CD4-positive, alpha-beta memory T cell (primary cell): ENCODE measurements at regions of chr14 and their contacts with region 1.

Region 1: GRCh38 chr14:52299692-52300278 is 14.3 kb upstream of the PTGER2 start:
- DNase-seq: peak in 4 of 5 donors; percentile 55 to 64 (median 60)
- H3K4me3 ChIP-seq: no peak overlapping the region
- H3K4me3 Mint-ChIP-seq: peak overlapping the region in 1 of 8 donors; percentile 36
- H3K27ac ChIP-seq: no peak overlapping the region
- H3K27ac Mint-ChIP-seq: peak overlapping the region in 3 of 7 donors; percentile 39 to 62 (median 52)
- H3K4me1 ChIP-seq: peaks cover 40% of the 10 kb centered on the region
- H3K4me1 Mint-ChIP-seq: peaks cover 37 to 55% (median 53%) of the 10 kb centered on the region in 4 donors
- H3K27me3 ChIP-seq: no peaks in the 10 kb centered on the region
- H3K27me3 Mint-ChIP-seq: no peaks in the 10 kb centered on the region

Region 2: GRCh38 chr14:52015411-52016030 is 284.3 kb before region 1 on chr14:
- CTCF ChIA-PET with region 1: no interaction called
- POLR2A ChIA-PET with region 1: no interaction called
- intact Hi-C with region 1: no loop called
- DNase-seq: no peak
- H3K4me3 ChIP-seq: no peak overlapping the region
- H3K4me3 Mint-ChIP-seq: no peak overlapping the region
- H3K27ac ChIP-seq: no peak overlapping the region
- H3K27ac Mint-ChIP-seq: no peak overlapping the region
- H3K4me1 ChIP-seq: no peaks in the 10 kb centered on the region
- H3K4me1 Mint-ChIP-seq: peaks cover 0 to 5% (median 2%) of the 10 kb centered on the region in 4 donors
- H3K27me3 ChIP-seq: no peaks in the 10 kb centered on the region
- H3K27me3 Mint-ChIP-seq: peaks cover 3 to 5% of the 10 kb centered on the region in 2 donors

Region 3: DNA sequence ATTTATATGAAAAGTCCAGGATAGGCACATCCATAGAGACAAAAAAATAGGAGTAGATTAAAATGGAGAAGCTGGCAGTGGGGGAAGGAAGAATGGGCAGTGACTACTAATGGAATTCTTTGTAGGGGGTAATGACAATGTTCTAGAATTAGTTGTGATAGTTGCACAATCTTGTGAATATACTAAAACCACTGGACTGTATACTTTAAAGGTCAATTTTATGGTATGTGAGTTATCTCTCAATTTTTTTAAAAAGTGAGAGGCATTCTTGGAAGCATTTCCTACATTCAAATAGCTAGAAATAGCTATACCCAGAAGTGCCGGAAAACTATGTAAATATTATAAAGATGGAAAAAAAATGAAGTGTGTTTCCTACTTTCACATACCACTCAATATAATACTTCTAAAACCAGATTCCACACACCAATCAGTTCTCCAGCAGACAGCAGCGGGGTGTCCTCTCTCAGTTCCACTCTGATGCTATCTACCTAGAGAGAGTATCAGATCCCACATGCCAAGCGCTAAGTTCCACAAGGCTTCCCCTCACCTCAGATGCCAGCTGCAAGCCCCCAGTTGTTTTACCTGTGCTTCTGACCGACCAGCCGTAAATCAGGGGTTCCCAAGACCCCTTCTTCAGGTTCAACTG is 189.2 kb before region 1 on chr14:
- CTCF ChIA-PET with region 1: no interaction called
- POLR2A ChIA-PET with region 1: no interaction called
- intact Hi-C with region 1: no loop called
- DNase-seq: no peak
- H3K4me3 ChIP-seq: no peak overlapping the region
- H3K4me3 Mint-ChIP-seq: no peak overlapping the region
- H3K27ac ChIP-seq: no peak overlapping the region
- H3K27ac Mint-ChIP-seq: no peak overlapping the region
- H3K4me1 ChIP-seq: no peaks in the 10 kb centered on the region
- H3K4me1 Mint-ChIP-seq: no peaks in the 10 kb centered on the region
- H3K27me3 ChIP-seq: no peaks in the 10 kb centered on the region
- H3K27me3 Mint-ChIP-seq: no peaks in the 10 kb centered on the region

Region 4: DNA sequence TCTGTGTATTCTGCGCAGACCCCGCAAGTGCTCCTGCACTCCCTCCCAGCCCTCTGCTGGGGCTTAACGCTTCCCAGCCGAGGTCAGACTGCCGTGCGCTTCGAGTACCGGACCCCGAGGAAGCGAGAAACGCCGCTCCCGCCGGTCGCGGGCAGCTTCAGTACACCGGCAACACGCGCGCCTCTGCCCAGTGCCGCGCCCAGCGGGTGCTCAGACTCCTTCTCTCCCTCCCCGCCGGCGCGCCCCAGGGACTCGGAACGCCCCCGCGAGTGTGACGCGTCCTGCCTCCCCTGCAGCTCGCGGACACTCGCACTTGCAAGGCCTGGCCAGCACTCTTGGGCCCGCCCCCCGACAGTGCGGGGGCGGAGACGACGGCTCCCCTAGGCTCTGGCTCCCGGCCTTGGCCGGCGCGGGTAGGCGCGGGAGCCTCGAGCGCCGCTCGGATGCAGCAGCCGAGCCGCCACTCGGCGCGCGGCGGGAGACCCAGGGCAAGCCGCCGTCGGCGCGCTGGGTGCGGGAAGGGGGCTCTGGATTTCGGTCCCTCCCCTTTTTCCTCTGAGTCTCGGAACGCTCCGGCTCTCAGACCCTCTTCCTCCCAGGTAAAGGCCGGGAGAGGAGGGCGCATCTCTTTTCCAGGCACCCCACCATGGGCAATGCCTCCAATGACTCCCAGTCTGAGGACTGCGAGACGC is 14.3 kb after region 1 on chr14 and contains the start of gene PTGER2:
- CTCF ChIA-PET with region 1: interaction called, 14 read pairs
- POLR2A ChIA-PET with region 1: interaction called, 66 read pairs
- intact Hi-C with region 1: loop called (anchors 2 kb)
- DNase-seq: peak; percentile 64 to 83 (median 74)
- H3K4me3 ChIP-seq: peak within 1 kb of the TSS; percentile 83 to 86
- H3K4me3 Mint-ChIP-seq: peak within 1 kb of the TSS; percentile 95 to 100 (median 99)
- H3K27ac ChIP-seq: peak within 1 kb of the TSS; percentile 59
- H3K27ac Mint-ChIP-seq: peak within 1 kb of the TSS; percentile 87 to 97 (median 92)
- H3K4me1 ChIP-seq: peaks cover 70% of the 10 kb centered on the region
- H3K4me1 Mint-ChIP-seq: peaks cover 45 to 90% (median 63%) of the 10 kb centered on the region in 4 donors
- H3K27me3 ChIP-seq: no peaks in the 10 kb centered on the region
- H3K27me3 Mint-ChIP-seq: peaks cover 0 to 2% of the 10 kb centered on the region in 2 donors
- total RNA-seq, gene PTGER2: 29.4 to 30.2 TPM

Region 5: DNA sequence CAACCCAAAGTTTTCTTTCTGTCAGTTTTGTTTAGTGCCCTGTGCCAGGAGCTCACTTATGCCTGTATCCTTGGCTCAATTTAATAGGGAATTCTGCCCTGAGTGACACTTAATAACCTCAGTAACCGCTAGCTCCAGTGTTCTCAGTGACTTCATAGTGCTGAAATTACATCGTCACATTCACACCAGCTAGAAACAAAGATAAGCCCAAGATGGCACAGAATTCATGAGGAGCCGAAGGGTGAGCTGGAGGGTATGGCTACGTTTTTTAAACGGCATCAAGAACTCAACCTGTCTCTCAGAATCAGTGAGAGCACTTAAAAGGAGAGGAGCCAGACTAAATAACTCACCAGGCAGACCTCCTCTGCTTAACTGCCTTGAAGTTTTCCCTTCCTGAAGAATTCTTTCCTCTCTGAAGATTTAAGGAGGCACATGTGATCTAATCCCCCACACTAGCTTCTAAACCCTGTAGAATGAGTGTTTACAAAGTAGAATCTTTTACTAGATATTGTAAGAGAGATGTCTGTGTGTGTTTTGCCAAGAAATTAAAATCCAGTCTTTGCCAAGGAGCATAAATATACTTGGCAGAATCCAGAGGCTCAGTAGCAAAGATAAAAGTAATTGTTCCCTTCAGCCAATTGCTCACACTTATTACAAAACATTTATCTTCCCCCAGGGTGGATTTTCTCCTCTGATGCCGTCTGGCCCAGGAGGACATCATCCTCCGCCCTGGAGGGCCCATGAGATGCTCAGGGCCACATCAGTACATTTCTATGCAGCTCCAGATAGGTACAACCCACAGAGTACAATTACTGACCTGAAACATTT is 51.7 kb after region 1 on chr14:
- CTCF ChIA-PET with region 1: no interaction called
- POLR2A ChIA-PET with region 1: no interaction called
- intact Hi-C with region 1: no loop called
- DNase-seq: no peak
- H3K4me3 ChIP-seq: peak overlapping the region; percentile 18 to 33
- H3K4me3 Mint-ChIP-seq: peak overlapping the region; percentile 83 to 90 (median 88)
- H3K27ac ChIP-seq: peak overlapping the region; percentile 27
- H3K27ac Mint-ChIP-seq: peak overlapping the region; percentile 90 to 95 (median 93)
- H3K4me1 ChIP-seq: peaks cover 75% of the 10 kb centered on the region
- H3K4me1 Mint-ChIP-seq: peaks cover 56 to 83% (median 68%) of the 10 kb centered on the region in 4 donors
- H3K27me3 ChIP-seq: no peaks in the 10 kb centered on the region
- H3K27me3 Mint-ChIP-seq: peaks cover 0 to 3% of the 10 kb centered on the region in 2 donors

Region 6: DNA sequence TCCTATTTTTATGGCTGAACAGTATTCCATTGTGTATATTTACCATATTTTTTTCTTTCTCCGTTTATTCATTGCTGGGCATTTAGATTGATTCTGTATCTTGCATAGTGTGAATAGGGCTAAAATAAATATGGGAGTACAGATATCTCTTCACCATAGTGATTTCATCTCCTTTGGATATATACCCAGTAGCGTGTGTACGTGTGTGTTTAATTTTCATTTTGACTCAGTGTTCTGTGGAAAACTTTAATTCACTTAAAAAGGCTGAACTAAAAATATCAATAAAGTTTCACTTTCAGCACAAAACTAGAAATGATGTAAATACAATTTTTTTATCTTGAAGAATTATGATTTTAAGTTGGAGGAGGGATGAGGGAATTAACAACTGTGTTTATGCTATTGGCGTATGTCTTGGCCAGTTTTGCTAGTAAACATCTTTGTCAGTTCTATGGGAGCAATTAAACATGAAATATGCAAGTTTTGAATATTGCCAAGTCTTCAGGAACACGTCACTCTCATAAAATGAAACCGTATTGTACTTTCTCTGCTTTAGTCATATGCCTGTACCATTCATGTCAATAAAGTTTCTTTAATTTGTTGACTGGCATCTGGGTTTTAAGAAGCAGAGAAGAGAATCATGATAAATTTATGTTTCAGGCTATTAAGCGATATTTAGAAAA is 114.1 kb after region 1 on chr14:
- CTCF ChIA-PET with region 1: interaction called, 3 read pairs
- POLR2A ChIA-PET with region 1: interaction called, 3 read pairs
- intact Hi-C with region 1: loop called (anchors 1 kb)
- DNase-seq: no peak
- H3K4me3 ChIP-seq: no peak overlapping the region
- H3K4me3 Mint-ChIP-seq: peak overlapping the region; percentile 11 to 78 (median 48)
- H3K27ac ChIP-seq: no peak overlapping the region
- H3K27ac Mint-ChIP-seq: peak overlapping the region in 3 of 7 donors; percentile 9 to 50 (median 24)
- H3K4me1 ChIP-seq: peaks cover 14% of the 10 kb centered on the region
- H3K4me1 Mint-ChIP-seq: peaks cover 16 to 54% (median 22%) of the 10 kb centered on the region in 4 donors
- H3K27me3 ChIP-seq: no peaks in the 10 kb centered on the region
- H3K27me3 Mint-ChIP-seq: no peaks in the 10 kb centered on the region

Region 7: GRCh38 chr14:52473557-52473956 is 173.8 kb after region 1 on chr14:
- CTCF ChIA-PET with region 1: interaction called, 33 read pairs
- POLR2A ChIA-PET with region 1: no interaction called
- intact Hi-C with region 1: loop called (anchors 1 kb)
- DNase-seq: peak in 4 of 5 donors; percentile 46 to 55 (median 50)
- H3K4me3 ChIP-seq: no peak overlapping the region
- H3K4me3 Mint-ChIP-seq: no peak overlapping the region
- H3K27ac ChIP-seq: no peak overlapping the region
- H3K27ac Mint-ChIP-seq: no peak overlapping the region
- H3K4me1 ChIP-seq: peaks cover 7% of the 10 kb centered on the region
- H3K4me1 Mint-ChIP-seq: peaks cover 12 to 26% (median 17%) of the 10 kb centered on the region in 4 donors
- H3K27me3 ChIP-seq: no peaks in the 10 kb centered on the region
- H3K27me3 Mint-ChIP-seq: no peaks in the 10 kb centered on the region

Region 8: DNA sequence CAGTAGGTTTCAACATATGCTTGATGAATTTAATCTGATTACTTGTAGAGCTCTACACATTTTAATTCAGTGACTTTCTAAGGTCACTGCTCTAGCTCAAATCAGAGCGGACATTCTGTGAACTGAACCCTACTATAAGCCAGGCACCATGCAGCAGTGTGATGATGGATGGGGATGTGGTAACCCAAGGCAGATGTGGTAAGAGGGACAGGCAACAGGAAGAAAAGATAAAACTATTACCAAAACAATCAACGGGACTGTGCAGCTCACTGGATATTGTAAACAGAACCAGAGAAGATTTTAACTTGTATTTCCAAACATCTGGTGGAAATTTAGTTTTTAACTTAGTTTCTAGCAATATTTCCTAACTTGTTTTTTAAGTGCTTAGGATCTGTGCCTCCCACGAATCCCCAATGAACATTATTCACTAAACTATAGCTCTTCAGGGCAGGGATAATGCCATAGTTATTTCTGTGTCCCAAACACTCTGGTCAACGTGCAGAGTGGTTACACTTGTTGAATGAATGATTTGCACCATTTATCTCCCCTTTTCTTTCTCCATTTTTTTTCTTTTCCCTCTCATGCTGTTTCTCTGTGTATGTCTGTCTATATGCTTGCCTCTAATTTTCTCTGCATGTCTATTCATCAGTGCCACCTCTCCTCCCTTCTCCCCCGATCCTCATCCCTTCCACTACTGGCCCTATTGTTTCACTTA is 392.6 kb after region 1 on chr14:
- CTCF ChIA-PET with region 1: no interaction called
- POLR2A ChIA-PET with region 1: no interaction called
- intact Hi-C with region 1: no loop called
- DNase-seq: peak; percentile 26 to 45 (median 38)
- H3K4me3 ChIP-seq: no peak overlapping the region
- H3K4me3 Mint-ChIP-seq: peak overlapping the region; percentile 12 to 80 (median 65)
- H3K27ac ChIP-seq: no peak overlapping the region
- H3K27ac Mint-ChIP-seq: peak overlapping the region; percentile 13 to 92 (median 40)
- H3K4me1 ChIP-seq: peaks cover 70% of the 10 kb centered on the region
- H3K4me1 Mint-ChIP-seq: peaks cover 49 to 77% (median 64%) of the 10 kb centered on the region in 4 donors
- H3K27me3 ChIP-seq: no peaks in the 10 kb centered on the region
- H3K27me3 Mint-ChIP-seq: no peaks in the 10 kb centered on the region

Region 9: DNA sequence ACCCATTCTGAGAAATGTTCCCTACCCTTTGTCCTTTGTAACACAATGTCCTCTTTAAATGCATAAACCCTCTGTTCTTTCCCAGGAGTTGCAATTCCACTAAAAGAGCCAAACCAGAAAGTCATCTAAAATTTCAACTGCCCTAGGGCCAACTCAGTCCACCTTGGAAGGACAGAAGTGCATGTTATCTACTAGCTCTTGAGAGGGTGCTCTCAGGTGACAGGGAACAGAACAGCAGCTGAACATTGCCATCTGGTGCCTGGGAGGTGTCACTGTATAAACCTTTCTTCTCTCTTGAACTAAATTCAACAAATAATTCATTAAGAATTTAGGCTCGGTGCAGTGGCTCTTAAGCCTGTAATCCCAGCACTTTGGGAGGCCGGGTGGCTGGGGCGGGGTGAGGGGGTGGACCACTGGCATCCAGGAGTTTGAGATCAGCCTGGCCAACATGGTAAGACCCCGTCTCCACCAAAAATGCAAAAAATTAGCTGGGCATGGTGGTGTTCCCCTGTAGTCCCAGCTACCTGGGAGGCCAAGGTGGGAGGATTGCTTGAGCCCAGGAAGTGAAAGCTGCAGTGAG is 661.4 kb after region 1 on chr14:
- CTCF ChIA-PET with region 1: no interaction called
- POLR2A ChIA-PET with region 1: no interaction called
- intact Hi-C with region 1: loop called (anchors 1 kb)
- DNase-seq: peak; percentile 61 to 69 (median 64)
- H3K4me3 ChIP-seq: no peak overlapping the region
- H3K4me3 Mint-ChIP-seq: peak overlapping the region in 6 of 8 donors; percentile 4 to 56 (median 20)
- H3K27ac ChIP-seq: no peak overlapping the region
- H3K27ac Mint-ChIP-seq: peak overlapping the region in 6 of 7 donors; percentile 25 to 86 (median 68)
- H3K4me1 ChIP-seq: peaks cover 5% of the 10 kb centered on the region
- H3K4me1 Mint-ChIP-seq: peaks cover 9 to 19% (median 15%) of the 10 kb centered on the region in 4 donors
- H3K27me3 ChIP-seq: no peaks in the 10 kb centered on the region
- H3K27me3 Mint-ChIP-seq: no peaks in the 10 kb centered on the region